WTC11 (cell line): ENCODE measurements at regions of chr9 and their contacts with region 1.

Region 1: DNA sequence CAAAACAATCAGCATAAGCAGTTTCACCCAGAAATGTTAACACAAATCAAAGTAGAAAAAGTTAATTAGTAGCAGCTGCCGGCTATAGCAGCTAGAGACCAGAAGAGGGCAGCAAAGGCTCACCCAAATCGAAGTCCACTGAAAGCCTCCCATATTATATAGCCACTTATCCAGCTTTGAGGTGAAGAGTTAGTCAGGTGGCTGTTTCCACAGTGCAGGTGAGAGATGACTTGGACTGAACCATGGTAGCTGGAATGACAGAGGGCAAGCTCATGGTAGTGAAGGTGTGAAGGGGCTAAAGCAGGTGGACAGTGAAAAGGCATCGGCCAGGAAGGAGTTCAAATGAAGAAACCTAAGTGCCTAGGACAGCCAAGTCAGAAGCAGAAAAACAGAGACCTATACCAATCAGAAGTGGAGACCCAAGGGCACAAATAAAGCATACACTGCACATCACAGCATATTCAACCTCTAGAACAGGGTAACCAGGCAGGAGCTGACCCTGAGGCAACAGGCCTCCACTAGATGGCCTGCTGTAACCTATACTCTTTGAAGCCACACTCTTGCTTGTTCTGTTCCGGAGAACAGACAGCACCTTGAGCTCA is 7.2 kb upstream of the RNF38 start:
- DNase-seq: peak; percentile 43
- ATAC-seq: peak; percentile 87
- H3K4me3 Mint-ChIP-seq: no peak overlapping the region
- H3K27ac Mint-ChIP-seq: peak overlapping the region; percentile 87
- H3K4me1 Mint-ChIP-seq: peaks cover 15% of the 10 kb centered on the region
- H3K27me3 Mint-ChIP-seq: no peaks in the 10 kb centered on the region
- CTCF ChIP-seq: peak; percentile 87

Region 2: GRCh38 chr9:36436909-36437308 is 29.7 kb after region 1 on chr9:
- CTCF ChIA-PET with region 1: interaction called, 48 read pairs
- POLR2A ChIA-PET with region 1: interaction called, 3 read pairs
- DNase-seq: no peak
- ATAC-seq: no peak; the same call in 1 of the 2 replicates
- H3K4me3 Mint-ChIP-seq: no peak overlapping the region
- H3K27ac Mint-ChIP-seq: peak overlapping the region; percentile 89; the same call in 1 of the 2 replicates
- H3K4me1 Mint-ChIP-seq: peaks cover 43% of the 10 kb centered on the region
- H3K27me3 Mint-ChIP-seq: no peaks in the 10 kb centered on the region
- CTCF ChIP-seq: no peak

Region 3: DNA sequence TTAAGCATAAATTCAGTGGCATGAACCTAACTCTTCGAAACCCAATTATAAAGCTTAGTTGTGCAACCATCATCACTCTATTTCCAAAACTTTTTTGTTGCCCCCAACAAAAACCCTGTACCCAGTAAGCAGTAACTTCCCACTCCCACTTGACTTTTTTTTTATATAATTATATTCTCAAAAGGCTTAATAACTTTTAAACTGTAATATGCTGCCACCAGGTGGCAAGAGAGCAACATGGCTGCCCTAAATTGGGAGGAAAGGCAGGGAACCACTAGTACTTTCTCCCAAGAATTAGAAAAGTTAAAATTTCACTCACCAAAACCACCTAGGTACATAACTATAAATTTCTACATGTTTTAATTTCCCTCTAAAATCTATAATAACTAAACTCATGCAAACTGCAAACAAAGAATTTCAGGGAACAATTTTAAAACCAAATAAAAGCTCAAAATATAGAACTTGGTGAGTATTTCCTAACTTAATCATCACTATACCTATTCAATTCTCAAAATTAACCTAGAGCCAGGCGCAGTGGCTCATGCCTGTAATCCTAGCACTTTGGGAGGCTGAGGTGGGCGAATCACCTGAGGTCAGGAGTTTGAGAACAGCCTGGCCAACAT is 43.0 kb after region 1 on chr9:
- CTCF ChIA-PET with region 1: interaction called, 68 read pairs
- POLR2A ChIA-PET with region 1: no interaction called
- DNase-seq: no peak
- ATAC-seq: no peak; the same call in 1 of the 2 replicates
- H3K4me3 Mint-ChIP-seq: no peak overlapping the region
- H3K27ac Mint-ChIP-seq: peak overlapping the region; percentile 74
- H3K4me1 Mint-ChIP-seq: peaks cover 28% of the 10 kb centered on the region
- H3K27me3 Mint-ChIP-seq: no peaks in the 10 kb centered on the region
- CTCF ChIP-seq: 0 out of 2 replicates have a peak, but pooled peaks have one; percentile 37

Region 4: GRCh38 chr9:36487482-36488388 is 80.5 kb after region 1 on chr9:
- CTCF ChIA-PET with region 1: interaction called, 17 read pairs
- POLR2A ChIA-PET with region 1: interaction called, 4 read pairs
- DNase-seq: peak; percentile 89
- ATAC-seq: peak; percentile 85
- H3K4me3 Mint-ChIP-seq: peak overlapping the region; percentile 88
- H3K27ac Mint-ChIP-seq: peak overlapping the region; percentile 96
- H3K4me1 Mint-ChIP-seq: peaks cover 57% of the 10 kb centered on the region
- H3K27me3 Mint-ChIP-seq: no peaks in the 10 kb centered on the region
- CTCF ChIP-seq: no peak

Region 5: GRCh38 chr9:36548454-36548853 is 141.2 kb after region 1 on chr9:
- CTCF ChIA-PET with region 1: interaction called, 51 read pairs
- POLR2A ChIA-PET with region 1: no interaction called
- DNase-seq: no peak
- ATAC-seq: no peak
- H3K4me3 Mint-ChIP-seq: no peak overlapping the region
- H3K27ac Mint-ChIP-seq: peak overlapping the region; percentile 25; the same call in 1 of the 2 replicates
- H3K4me1 Mint-ChIP-seq: peaks cover 9% of the 10 kb centered on the region
- H3K27me3 Mint-ChIP-seq: no peaks in the 10 kb centered on the region
- CTCF ChIP-seq: no peak

Region 6: DNA sequence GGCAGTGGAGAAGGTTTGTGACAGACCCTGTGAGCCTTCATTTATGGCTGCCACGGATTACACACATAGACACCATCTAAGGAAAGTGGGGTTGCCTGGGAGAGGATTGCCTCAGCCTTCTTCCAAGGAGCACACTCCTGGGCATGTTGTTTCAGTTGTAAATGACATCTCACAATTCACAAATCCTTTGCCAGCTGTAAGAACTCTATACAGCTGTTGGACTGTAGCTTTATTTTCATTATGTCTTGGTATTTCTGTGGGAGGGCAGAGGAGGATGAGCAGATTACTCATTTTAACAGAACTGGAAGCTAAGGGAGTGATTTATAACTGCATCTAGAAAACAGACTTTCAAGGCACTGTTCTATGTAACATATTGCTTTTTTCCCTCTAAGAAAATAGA is 191.1 kb after region 1 on chr9:
- CTCF ChIA-PET with region 1: interaction called, 11 read pairs
- POLR2A ChIA-PET with region 1: no interaction called
- DNase-seq: no peak
- ATAC-seq: no peak
- H3K4me3 Mint-ChIP-seq: no peak overlapping the region
- H3K27ac Mint-ChIP-seq: 0 out of 2 replicates have a peak overlapping the region, but pooled peaks have one; percentile 4
- H3K4me1 Mint-ChIP-seq: no peaks in the 10 kb centered on the region
- H3K27me3 Mint-ChIP-seq: no peaks in the 10 kb centered on the region
- CTCF ChIP-seq: no peak